GM18951 (cell line): ENCODE measurements at regions of chr4 and their contacts with region 1.

Region 1: DNA sequence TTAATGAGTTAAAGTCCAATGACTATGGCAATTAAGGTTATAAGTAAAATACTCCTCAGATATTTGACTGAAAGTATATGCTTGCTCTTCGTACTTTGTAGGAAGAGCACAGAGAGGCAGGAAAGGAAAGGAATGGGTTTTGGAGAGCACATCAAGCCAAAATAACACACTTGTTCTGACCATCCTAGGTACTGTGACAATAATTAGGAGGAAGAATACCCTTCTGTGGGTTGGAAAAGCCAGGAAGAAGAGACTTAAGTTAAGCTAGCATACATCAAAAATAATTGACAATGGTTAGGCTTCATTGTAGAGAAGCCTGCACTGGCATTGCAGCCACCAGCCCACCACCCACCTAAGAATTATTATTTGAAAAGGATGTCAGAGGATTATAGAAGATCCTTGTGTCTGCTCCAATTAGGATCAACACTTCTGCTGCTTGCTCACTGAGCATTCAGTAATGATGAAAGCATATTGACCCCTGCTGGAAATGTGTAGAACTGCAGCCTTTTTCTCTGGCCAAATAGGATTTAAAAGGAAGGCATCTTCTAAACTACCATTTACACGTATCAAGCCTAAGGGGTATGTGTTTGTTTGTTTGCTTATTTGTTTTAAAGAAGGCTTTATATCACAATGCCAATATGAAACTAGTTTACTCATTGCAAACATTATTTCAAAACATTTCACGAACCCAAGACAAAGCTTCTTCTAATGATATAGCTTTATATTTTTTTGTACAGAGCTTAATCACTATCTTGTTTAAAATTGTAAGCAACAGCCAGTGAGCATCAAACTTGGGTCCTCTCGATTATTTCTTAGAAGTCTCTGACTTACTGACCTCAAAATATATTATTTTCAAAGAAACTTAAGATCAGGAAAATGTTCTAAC is 286.2 kb upstream of the TET2 start:
- POLR2A ChIP-seq: no peak

Region 2: DNA sequence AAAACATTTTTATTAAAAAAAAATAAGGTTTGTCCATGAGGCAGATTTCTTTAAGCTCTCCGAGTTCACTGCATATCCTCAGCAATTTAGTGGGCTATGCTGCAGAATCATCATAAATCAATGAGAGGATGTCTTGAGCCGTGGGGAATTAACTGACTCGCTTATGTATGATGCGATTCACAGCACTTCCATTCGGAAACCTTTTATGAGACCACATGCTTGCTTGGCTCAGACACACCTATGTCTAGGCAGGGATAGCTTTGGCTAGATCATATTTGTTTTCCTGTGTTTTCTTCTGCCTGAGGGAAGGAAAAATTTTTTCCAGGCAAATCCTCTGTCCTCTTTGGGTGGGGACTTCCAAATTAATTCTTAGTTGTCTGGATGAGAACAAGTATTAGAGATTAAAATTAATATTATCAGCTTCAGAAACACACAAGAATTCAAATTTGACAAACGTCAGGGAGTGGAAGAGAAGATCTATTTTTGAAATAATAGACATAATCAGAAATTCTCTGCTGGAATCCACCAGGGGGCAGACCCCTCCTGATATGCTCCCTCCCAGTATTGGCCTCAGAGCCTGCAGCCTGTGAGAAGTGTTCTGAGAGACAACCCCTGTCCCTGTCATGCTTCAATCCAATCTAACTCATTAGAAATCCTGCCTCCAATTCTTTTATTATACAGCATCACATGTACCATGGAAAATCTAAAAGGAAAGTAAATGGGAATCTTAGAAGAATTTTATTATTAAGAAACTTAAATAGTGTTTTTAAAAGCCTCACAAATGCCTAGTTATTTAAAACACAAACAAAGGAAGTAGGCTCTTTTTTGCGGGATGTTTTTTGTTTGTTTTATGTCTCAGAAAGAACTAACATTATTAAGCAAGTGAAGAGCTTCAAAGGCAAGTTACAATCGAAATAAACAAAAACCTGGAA is 795.6 kb before region 1 on chr4:
- in situ Hi-C with region 1: loop called (anchors 10 kb)
- POLR2A ChIP-seq: no peak

Region 3: DNA sequence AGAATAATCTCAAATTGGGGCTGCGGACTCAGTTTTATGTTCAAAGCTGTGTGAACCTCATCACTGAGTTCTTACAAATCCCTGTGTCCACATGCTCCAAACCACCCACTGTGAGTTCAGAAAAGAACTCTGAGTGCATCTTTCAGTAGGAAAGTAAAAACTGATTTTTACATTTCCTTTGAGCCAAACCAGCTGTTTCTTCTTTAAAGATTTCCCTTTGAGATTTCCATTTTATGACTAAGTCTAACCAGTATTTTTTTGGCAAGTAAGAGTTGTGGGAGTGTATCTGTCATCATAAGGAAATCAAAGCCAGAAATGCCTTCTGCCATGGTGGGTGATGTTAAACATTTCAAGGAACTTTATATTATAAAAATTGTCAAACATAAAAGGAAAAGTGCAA is 386.2 kb after region 1 on chr4:
- in situ Hi-C with region 1: no loop called
- POLR2A ChIP-seq: no peak